CD4-positive, alpha-beta memory T cell (primary cell): ENCODE measurements at regions of chr1 and their contacts with region 1.

Region 1: DNA sequence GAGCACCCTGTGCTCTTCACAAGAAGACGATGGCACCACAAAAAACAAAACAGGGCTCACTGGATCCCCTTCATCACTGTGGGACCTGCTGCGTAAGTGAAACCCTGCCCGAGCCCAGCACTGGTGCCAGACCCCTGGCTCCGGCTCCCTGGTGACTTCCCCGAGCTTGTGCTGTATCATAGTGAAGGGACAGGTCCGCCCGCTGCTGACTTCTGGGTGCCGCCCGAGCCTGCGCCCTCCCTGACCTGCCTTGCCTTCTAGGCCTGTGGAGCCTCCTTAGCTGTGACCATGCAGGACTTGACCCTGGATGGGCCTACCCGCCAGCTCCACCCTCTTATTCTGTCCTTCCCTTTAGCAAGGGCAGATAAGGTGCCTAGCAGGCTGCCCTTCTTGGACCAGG is 7.9 kb downstream of the TEX35 start:
- DNase-seq: no peak
- H3K4me3 ChIP-seq: no peak overlapping the region
- H3K4me3 Mint-ChIP-seq: no peak overlapping the region
- H3K27ac ChIP-seq: no peak overlapping the region
- H3K27ac Mint-ChIP-seq: no peak overlapping the region
- H3K4me1 ChIP-seq: no peaks in the 10 kb centered on the region
- H3K4me1 Mint-ChIP-seq: no peaks in the 10 kb centered on the region
- H3K27me3 ChIP-seq: no peaks in the 10 kb centered on the region
- H3K27me3 Mint-ChIP-seq: no peaks in the 10 kb centered on the region

Region 2: DNA sequence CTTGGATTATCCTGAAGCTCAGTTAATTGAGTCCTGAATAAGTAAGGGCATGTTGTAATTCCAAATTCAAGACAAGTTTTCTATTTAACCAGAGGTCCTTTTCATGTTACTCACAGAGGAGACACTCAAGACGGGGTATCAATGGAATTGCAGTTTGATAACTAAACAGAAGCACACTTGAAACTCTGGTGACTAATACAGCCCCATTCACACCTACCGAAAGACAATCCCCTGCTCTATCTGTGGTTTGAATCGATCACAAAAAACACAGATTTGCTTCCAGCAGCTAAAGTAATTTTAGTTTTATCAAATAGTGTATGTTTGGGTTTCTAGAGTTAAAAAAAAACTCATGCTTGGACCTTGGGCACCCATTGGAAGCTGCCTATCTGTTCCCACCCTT is 52.5 kb after region 1 on chr1:
- CTCF ChIA-PET with region 1: no interaction called
- POLR2A ChIA-PET with region 1: no interaction called
- intact Hi-C with region 1: loop called (anchors 5 kb)
- DNase-seq: no peak
- H3K4me3 ChIP-seq: no peak overlapping the region
- H3K4me3 Mint-ChIP-seq: no peak overlapping the region
- H3K27ac ChIP-seq: no peak overlapping the region
- H3K27ac Mint-ChIP-seq: no peak overlapping the region
- H3K4me1 ChIP-seq: no peaks in the 10 kb centered on the region
- H3K4me1 Mint-ChIP-seq: no peaks in the 10 kb centered on the region
- H3K27me3 ChIP-seq: no peaks in the 10 kb centered on the region
- H3K27me3 Mint-ChIP-seq: peaks cover 2 to 4% of the 10 kb centered on the region in 2 donors